Naive thymus-derived CD4-positive, alpha-beta T cell (primary cell): ENCODE measurements at regions of chr9 and their contacts with region 1.

Region 1: GRCh38 chr9:114696814-114697544 is 15.0 kb upstream of the TEX48 start:
- DNase-seq: peak in 1 of 9 donors; percentile 67
- ATAC-seq: peak; percentile 37
- H3K4me3 ChIP-seq: no peak overlapping the region
- H3K4me3 Mint-ChIP-seq: peak overlapping the region in 1 of 10 donors; percentile 80
- H3K27ac ChIP-seq: no peak overlapping the region
- H3K27ac Mint-ChIP-seq: peak overlapping the region in 3 of 9 donors; percentile 27 to 99 (median 66)
- H3K4me1 ChIP-seq: peaks cover 0 to 17% of the 10 kb centered on the region in 2 donors
- H3K4me1 Mint-ChIP-seq: peaks cover 5 to 79% (median 9%) of the 10 kb centered on the region in 7 donors
- H3K27me3 ChIP-seq: no peaks in the 10 kb centered on the region
- H3K27me3 Mint-ChIP-seq: no peaks in the 10 kb centered on the region

Region 2: DNA sequence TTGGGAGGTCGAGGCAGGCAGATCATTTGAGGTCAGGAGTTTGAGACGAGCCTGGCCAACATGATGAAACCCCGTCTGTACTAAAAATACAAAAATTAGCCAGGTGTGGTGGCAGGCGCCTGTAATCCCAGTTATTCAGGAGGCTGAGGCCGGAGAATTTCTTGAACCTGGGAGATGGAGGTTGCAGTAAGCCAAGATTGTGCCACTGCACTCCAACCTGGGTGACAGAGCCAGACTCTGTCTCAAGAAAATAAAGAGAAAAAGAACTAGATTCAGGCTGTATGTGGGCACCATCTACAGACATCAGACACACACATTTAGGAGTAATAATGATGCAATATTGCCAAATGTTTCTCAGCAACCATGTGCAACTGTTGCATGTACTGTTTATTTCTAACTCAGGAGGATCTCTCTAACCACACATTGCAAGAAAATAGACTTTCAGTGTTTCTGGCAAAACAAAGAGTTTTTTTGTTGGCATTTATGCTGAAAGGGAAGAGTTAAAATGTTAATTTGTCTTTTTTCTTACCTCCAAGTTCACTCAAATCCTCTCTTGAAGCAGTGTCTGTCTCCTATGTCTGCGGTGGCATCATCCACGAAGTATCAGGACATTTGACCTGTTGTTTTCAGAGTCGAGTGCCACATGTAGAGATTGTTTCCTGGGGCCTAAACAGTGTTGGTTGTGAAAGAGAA is 379.2 kb before region 1 on chr9:
- CTCF ChIA-PET with region 1: no interaction called
- POLR2A ChIA-PET with region 1: no interaction called
- intact Hi-C with region 1: no loop called
- DNase-seq: no peak
- ATAC-seq: no peak
- H3K4me3 ChIP-seq: no peak overlapping the region
- H3K4me3 Mint-ChIP-seq: no peak overlapping the region
- H3K27ac ChIP-seq: no peak overlapping the region
- H3K27ac Mint-ChIP-seq: no peak overlapping the region
- H3K4me1 ChIP-seq: no peaks in the 10 kb centered on the region
- H3K4me1 Mint-ChIP-seq: peaks cover 0 to 7% (median 0%) of the 10 kb centered on the region in 7 donors
- H3K27me3 ChIP-seq: no peaks in the 10 kb centered on the region
- H3K27me3 Mint-ChIP-seq: peaks cover 0 to 6% (median 3%) of the 10 kb centered on the region in 5 donors

Region 3: GRCh38 chr9:114709636-114710035 is 12.7 kb after region 1 on chr9:
- CTCF ChIA-PET with region 1: interaction called, 3 read pairs
- POLR2A ChIA-PET with region 1: interaction called, 4 read pairs
- intact Hi-C with region 1: loop called in 1 of 2 experiments (anchors 1 kb)
- DNase-seq: no peak
- ATAC-seq: no peak
- H3K4me3 ChIP-seq: no peak overlapping the region
- H3K4me3 Mint-ChIP-seq: peak overlapping the region in 1 of 10 donors; percentile 47
- H3K27ac ChIP-seq: no peak overlapping the region
- H3K27ac Mint-ChIP-seq: peak overlapping the region in 1 of 9 donors; percentile 67
- H3K4me1 ChIP-seq: peaks cover 0 to 4% of the 10 kb centered on the region in 2 donors
- H3K4me1 Mint-ChIP-seq: peaks cover 0 to 65% (median 4%) of the 10 kb centered on the region in 7 donors
- H3K27me3 ChIP-seq: no peaks in the 10 kb centered on the region
- H3K27me3 Mint-ChIP-seq: peaks cover 0 to 2% (median 0%) of the 10 kb centered on the region in 5 donors

Region 4: GRCh38 chr9:114718801-114719221 is 21.8 kb after region 1 on chr9:
- CTCF ChIA-PET with region 1: no interaction called
- POLR2A ChIA-PET with region 1: no interaction called
- intact Hi-C with region 1: loop called in 1 of 2 experiments (anchors 1 kb)
- DNase-seq: peak in 5 of 9 donors; percentile 8 to 91 (median 18)
- ATAC-seq: peak; percentile 76
- H3K4me3 ChIP-seq: no peak overlapping the region
- H3K4me3 Mint-ChIP-seq: peak overlapping the region in 9 of 10 donors; percentile 0 to 75 (median 19)
- H3K27ac ChIP-seq: no peak overlapping the region
- H3K27ac Mint-ChIP-seq: peak overlapping the region in 6 of 9 donors; percentile 12 to 97 (median 64)
- H3K4me1 ChIP-seq: peaks cover 14 to 34% of the 10 kb centered on the region in 2 donors
- H3K4me1 Mint-ChIP-seq: peaks cover 10 to 88% (median 20%) of the 10 kb centered on the region in 7 donors
- H3K27me3 ChIP-seq: no peaks in the 10 kb centered on the region
- H3K27me3 Mint-ChIP-seq: no peaks in the 10 kb centered on the region